Naive thymus-derived CD4-positive, alpha-beta T cell (primary cell): ENCODE measurements at regions of chr4 and their contacts with region 1.

Region 1: DNA sequence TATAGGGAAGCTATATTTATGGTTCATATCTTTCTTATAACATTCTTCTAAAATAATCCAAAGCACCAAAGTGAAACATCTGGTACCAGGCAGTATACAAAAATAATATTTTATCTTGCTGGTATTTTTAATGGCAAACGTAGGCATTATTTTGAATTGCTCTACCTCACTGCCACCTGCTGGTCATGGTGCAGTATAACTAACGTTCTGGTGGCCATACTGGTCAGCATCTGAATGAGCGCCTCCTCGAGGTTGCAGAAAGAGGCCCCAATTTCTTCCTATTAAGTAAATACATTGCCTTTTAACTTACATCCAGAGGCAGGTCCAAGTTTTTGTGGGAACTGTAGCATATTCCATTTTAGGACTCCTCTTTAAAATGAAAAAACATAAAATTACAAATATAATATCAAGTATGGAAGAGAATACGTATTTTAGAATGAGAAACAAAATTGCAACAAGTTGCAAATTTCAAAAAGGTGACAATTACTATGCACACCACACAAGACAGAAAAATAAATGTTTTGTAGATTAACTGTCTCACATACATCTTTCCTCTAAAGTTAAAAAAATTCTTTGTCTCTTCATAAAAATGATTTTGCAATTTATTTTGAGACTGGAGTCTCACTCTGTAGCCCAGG is 22.9 kb upstream of the CWH43 start:
- DNase-seq: peak; percentile 39 to 84 (median 74)
- ATAC-seq: peak; percentile 99
- H3K4me3 ChIP-seq: no peak overlapping the region
- H3K4me3 Mint-ChIP-seq: no peak overlapping the region
- H3K27ac ChIP-seq: no peak overlapping the region
- H3K27ac Mint-ChIP-seq: peak overlapping the region in 1 of 9 donors; percentile 59
- H3K4me1 ChIP-seq: no peaks in the 10 kb centered on the region
- H3K4me1 Mint-ChIP-seq: peaks cover 0 to 5% (median 3%) of the 10 kb centered on the region in 7 donors
- H3K27me3 ChIP-seq: no peaks in the 10 kb centered on the region
- H3K27me3 Mint-ChIP-seq: peaks cover 0 to 11% (median 0%) of the 10 kb centered on the region in 5 donors

Region 2: DNA sequence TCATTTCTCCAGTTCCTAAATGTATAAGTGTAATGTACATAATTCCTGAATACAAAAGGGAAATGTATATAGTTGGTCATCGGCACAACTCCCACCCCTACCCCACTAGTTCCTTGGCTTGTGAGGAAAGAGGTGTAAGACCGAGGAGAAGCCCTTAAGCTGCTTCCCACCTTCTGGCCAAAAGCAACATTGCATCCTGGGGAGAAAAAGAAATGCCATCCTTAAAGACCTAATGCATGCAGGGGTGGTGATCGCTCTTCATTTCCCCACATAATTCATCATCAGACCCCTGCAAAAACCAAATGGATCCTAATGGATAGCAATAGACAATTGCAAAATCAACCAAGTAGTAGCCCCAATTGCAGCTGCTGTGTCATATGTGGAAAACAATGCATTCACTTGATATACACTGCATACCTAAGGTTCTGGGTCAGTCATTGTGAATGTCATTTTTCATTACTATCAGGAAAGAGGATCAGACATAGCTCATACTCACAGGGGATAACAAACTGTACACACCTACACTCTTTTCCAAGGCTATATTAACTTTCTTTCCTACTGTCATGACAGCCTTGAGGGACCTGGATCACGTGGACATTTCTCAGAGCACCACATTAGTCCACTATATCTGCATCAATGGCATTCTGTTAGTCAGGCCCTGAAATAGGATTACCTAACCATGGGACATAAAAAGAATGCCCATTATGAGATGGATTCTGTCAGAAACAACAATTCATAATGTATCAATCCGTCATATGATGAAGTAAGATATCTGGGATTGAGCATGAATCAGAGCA is 1017.0 kb before region 1 on chr4:
- CTCF ChIA-PET with region 1: no interaction called
- POLR2A ChIA-PET with region 1: no interaction called
- intact Hi-C with region 1: no loop called
- DNase-seq: no peak
- ATAC-seq: no peak
- H3K4me3 ChIP-seq: no peak overlapping the region
- H3K4me3 Mint-ChIP-seq: no peak overlapping the region
- H3K27ac ChIP-seq: no peak overlapping the region
- H3K27ac Mint-ChIP-seq: no peak overlapping the region
- H3K4me1 ChIP-seq: no peaks in the 10 kb centered on the region
- H3K4me1 Mint-ChIP-seq: no peaks in the 10 kb centered on the region
- H3K27me3 ChIP-seq: no peaks in the 10 kb centered on the region
- H3K27me3 Mint-ChIP-seq: peaks cover 0 to 4% (median 0%) of the 10 kb centered on the region in 5 donors

Region 3: DNA sequence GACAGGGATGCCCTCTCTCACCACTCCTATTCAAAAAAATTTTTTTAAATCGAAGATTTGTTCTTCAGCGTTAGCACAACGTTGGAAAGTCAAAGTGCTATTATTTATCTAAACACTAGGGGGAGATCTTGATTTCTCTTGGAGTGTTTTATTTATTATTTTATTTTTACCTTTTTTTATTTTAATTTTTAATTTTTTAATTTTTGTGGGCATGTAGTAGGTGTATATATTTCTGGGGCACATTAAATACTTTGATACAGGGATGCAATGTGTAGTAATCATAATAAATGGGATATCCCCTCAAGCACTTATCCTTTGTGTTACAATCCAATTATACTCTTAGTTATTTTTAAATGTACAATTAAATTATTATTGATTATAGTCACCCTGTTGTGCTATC is 517.5 kb before region 1 on chr4:
- CTCF ChIA-PET with region 1: no interaction called
- POLR2A ChIA-PET with region 1: no interaction called
- intact Hi-C with region 1: loop called (anchors 1 kb)
- DNase-seq: peak in 3 of 9 donors; percentile 6 to 9 (median 8)
- ATAC-seq: no peak
- H3K4me3 ChIP-seq: no peak overlapping the region
- H3K4me3 Mint-ChIP-seq: no peak overlapping the region
- H3K27ac ChIP-seq: no peak overlapping the region
- H3K27ac Mint-ChIP-seq: no peak overlapping the region
- H3K4me1 ChIP-seq: no peaks in the 10 kb centered on the region
- H3K4me1 Mint-ChIP-seq: peaks cover 0 to 4% (median 0%) of the 10 kb centered on the region in 7 donors
- H3K27me3 ChIP-seq: no peaks in the 10 kb centered on the region
- H3K27me3 Mint-ChIP-seq: peaks cover 2 to 11% (median 4%) of the 10 kb centered on the region in 5 donors

Region 4: GRCh38 chr4:48681856-48682255 is 281.3 kb before region 1 on chr4:
- CTCF ChIA-PET with region 1: no interaction called
- POLR2A ChIA-PET with region 1: no interaction called
- intact Hi-C with region 1: loop called (anchors 1 to 2 kb)
- DNase-seq: peak in 6 of 9 donors; percentile 4 to 43 (median 25)
- ATAC-seq: peak; percentile 70
- H3K4me3 ChIP-seq: no peak overlapping the region
- H3K4me3 Mint-ChIP-seq: peak overlapping the region in 1 of 10 donors; percentile 26
- H3K27ac ChIP-seq: no peak overlapping the region
- H3K27ac Mint-ChIP-seq: peak overlapping the region in 7 of 9 donors; percentile 35 to 86 (median 69)
- H3K4me1 ChIP-seq: peaks cover 4 to 9% of the 10 kb centered on the region in 2 donors
- H3K4me1 Mint-ChIP-seq: peaks cover 22 to 52% (median 45%) of the 10 kb centered on the region in 7 donors
- H3K27me3 ChIP-seq: no peaks in the 10 kb centered on the region
- H3K27me3 Mint-ChIP-seq: no peaks in the 10 kb centered on the region

Region 5: DNA sequence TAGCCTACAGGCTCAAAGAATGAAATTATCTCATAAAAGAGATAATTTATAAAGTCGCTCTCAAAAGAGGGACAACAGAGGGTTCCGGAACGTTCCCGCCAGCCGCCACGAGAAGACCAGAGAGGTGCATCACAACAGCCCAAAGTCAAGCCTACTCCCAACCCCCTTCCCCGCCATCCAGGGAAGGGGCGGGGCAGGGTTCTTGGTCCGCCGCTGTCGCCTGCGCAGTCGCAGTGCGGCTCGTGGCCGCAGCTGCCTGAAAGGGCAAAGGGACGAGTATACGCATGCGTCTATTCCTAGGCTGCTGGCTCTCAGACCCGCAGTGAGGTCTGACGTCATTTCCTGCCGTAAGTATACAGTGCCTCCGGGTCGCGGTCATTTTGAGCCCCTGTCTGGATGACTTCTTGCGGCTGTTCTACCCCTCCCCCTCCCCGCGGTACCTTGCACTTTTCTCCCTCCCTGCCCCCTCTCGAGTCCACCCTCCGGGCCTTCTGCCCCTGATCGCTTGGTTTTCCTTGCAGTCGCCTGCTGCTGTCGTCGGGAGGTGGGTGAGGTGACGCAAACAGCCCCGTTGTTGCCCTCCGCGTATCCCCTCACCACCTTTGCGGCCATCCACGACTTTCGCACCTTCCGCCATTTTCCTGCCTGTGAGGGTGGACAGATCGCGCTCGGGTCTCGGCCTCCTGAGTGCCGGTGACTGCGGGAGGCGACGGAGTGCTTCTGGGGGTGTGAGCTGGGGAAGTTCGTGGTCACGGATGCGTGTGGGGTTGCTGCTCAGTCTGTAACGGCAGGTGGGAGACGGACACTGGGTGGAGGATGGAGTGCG is 132.2 kb before region 1 on chr4 and contains the start of gene OCIAD1:
- CTCF ChIA-PET with region 1: no interaction called
- POLR2A ChIA-PET with region 1: no interaction called
- intact Hi-C with region 1: no loop called
- DNase-seq: peak; percentile 80 to 98 (median 93)
- ATAC-seq: peak; percentile 98
- H3K4me3 ChIP-seq: peak within 1 kb of the TSS; percentile 98
- H3K4me3 Mint-ChIP-seq: peak within 1 kb of the TSS; percentile 96 to 100 (median 100)
- H3K27ac ChIP-seq: peak within 1 kb of the TSS; percentile 91
- H3K27ac Mint-ChIP-seq: peak within 1 kb of the TSS; percentile 98 to 100 (median 100)
- H3K4me1 ChIP-seq: peaks cover 10 to 12% of the 10 kb centered on the region in 2 donors
- H3K4me1 Mint-ChIP-seq: peaks cover 10 to 44% (median 36%) of the 10 kb centered on the region in 7 donors
- H3K27me3 ChIP-seq: no peaks in the 10 kb centered on the region
- H3K27me3 Mint-ChIP-seq: peaks cover 0 to 4% (median 4%) of the 10 kb centered on the region in 5 donors
- total RNA-seq, gene OCIAD1: 85.6 to 128 (median 102) TPM

Region 6: DNA sequence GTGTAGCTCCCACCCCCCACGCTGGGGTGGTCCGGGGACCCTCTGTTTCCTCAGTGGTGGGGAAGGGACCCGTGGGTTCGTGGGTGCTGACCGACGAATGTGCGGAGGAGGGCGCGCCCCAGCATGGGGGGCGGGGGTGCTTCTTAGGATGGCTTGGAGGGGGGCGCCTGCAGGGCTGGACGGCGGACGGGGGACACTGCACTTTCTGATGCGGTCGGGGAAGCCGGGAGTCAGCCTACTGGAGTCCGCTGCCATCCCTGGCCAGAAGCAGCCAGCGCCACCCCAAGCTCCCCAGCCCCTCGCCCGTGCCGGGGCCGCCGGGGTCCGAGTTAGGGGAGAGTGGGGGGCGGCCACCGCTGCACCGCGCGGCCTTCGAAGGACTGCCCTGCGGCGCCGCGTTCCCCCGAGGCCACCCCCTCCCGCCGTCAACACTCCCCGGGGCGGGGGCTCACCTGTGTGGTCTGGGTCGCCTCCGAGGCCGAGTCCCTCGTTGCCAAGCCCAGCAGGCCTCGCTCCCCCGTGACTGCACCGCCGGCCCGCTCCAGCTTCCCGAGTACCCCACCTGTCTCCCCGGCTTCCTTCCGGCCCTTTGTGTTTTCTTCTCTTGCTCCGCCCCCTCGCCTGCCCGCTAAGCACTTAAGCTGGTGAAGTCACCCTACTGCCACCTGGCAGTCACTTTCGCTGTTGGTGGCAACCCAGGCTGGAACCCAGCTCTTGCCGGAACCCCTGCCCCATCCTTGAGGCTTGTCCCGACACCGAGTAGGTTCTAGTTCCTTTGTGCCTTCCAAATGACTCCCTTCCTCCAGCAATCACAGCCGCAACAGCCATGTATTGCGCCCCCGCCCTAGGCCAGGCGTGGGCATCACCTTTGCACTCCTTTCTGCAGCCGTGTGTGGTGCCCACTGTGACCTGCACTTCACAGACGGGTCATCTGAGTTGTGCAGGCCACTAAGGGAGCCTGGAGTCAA is 56.7 kb before region 1 on chr4 and contains the start of gene OCIAD2:
- CTCF ChIA-PET with region 1: interaction called, 3 read pairs
- POLR2A ChIA-PET with region 1: interaction called, 3 read pairs
- intact Hi-C with region 1: loop called (anchors 1 kb)
- DNase-seq: peak; percentile 59 to 88 (median 86)
- ATAC-seq: peak; percentile 97
- H3K4me3 ChIP-seq: peak within 1 kb of the TSS; percentile 80
- H3K4me3 Mint-ChIP-seq: peak within 1 kb of the TSS; percentile 93 to 99 (median 97)
- H3K27ac ChIP-seq: peak within 1 kb of the TSS; percentile 82
- H3K27ac Mint-ChIP-seq: peak within 1 kb of the TSS; percentile 89 to 99 (median 96)
- H3K4me1 ChIP-seq: peaks cover 18 to 33% of the 10 kb centered on the region in 2 donors
- H3K4me1 Mint-ChIP-seq: peaks cover 32 to 63% (median 52%) of the 10 kb centered on the region in 7 donors
- H3K27me3 ChIP-seq: no peaks in the 10 kb centered on the region
- H3K27me3 Mint-ChIP-seq: no peaks in the 10 kb centered on the region
- total RNA-seq, gene OCIAD2: 42.0 to 142 (median 97.5) TPM